ENCODE measurements at regions of chr17 and their contacts with region 1.

Region 1: DNA sequence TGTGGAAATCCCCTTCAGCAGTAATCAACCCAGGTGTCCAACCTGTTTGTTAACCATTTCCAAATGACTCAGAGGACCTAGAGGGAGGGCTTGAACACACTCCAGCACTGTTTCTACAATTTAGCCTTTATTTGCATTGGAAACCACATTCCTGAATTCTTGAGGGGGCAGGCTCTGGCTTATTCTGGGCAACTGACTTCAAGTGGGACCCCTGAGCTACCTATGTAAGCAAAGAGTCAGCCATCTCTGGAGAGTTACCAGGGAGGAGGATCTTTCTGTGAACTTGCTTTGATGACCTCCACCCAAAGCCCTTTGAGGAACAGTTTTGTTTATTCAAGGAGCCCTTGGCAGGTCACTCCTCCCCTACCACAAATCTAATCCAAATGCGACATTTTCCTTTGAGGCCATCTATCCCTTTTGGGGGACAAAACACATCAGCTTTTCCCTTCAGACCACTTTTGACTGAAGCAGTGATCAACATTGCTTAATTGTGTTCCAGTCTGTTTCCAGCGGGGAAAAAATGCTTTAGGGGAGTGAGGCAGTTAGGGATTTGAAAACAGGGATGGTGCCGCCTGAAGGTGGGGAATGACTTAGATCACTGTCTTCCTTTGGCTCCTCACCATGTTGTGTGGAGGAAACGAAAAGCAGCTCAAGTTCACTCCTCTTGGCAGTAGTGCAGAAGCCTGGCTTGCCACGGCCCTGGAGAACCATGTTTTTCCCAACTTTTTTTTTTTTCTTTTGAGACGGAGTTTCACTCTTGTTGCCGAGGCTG is 46.2 kb downstream of the TUBD1 start:
- DNase-seq: peak; percentile 99
- ATAC-seq: peak; percentile 45
- H3K4me3 ChIP-seq: peak overlapping the region; percentile 13 to 54 (median 20)
- H3K27ac ChIP-seq: peak overlapping the region; percentile 98
- H3K4me1 ChIP-seq: peaks cover 94% of the 10 kb centered on the region
- H3K27me3 ChIP-seq: no peaks in the 10 kb centered on the region
- CTCF ChIP-seq: no peak; the same call in 1 of the 2 replicates
- EP300 ChIP-seq: peak; percentile 79 to 92; a peak in 3 of 4 replicates
- POLR2A ChIP-seq: peak in 1 of 2 experiments; percentile 73; a peak in 3 of 4 replicates
- RAD21 ChIP-seq: peak; percentile 28; the same call in 1 of the 2 replicates

Region 2: DNA sequence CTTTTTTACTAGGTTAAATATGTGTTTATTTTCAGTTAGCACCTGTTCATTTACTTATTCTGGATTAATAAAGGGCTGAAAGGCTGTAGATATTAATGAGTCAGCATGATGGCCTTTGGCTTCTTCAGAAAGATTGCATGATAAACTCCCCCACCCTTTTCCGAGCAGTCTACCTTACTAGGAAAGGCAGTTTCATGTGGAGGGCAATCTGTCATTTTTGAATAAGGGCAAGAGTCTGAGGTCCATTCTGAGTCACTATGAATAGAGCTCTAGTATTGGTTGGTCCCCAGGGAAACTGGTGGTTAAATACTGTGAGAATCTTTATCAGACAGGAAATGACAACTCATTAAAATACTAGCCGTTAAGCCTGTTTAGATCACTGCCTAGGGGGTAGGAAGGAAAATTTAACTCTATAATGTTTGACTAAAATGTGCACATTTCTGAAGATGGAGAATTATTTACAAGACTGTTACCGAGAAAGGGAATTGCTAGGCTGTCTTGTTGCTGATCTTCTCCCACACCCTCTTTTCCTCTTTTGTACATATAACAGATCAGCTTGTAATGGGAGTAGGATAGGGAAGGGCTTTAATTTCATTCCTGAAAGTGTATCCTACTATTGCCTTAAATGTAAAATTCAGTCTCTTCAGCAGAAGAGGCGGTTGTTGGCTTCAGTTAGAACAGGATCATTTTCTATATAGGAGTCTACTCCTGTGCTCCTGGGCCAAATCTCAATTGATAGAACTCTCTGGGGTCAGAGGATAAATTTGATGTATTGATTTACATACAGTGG is 17.2 kb before region 1 on chr17:
- CTCF ChIA-PET with region 1: no interaction called
- POLR2A ChIA-PET with region 1: interaction called, 29 read pairs
- in situ Hi-C with region 1: no loop called
- intact Hi-C with region 1: no loop called
- DNase-seq: peak; percentile 97
- ATAC-seq: peak; percentile 94
- H3K4me3 ChIP-seq: peak overlapping the region in 1 of 3 experiments; percentile 26; a peak in 1 of 6 replicates
- H3K27ac ChIP-seq: peak overlapping the region; percentile 90
- H3K4me1 ChIP-seq: peaks cover 84% of the 10 kb centered on the region
- H3K27me3 ChIP-seq: no peaks in the 10 kb centered on the region
- CTCF ChIP-seq: no peak
- EP300 ChIP-seq: peak; percentile 51 to 61; a peak in 2 of 4 replicates
- POLR2A ChIP-seq: 0 out of 4 replicates have a peak, but pooled peaks of 1 of the 2 experiments have one; percentile 20
- RAD21 ChIP-seq: no peak; the same call in 1 of the 2 replicates

Region 3: GRCh38 chr17:59863606-59864005 is 17.0 kb after region 1 on chr17:
- CTCF ChIA-PET with region 1: no interaction called
- POLR2A ChIA-PET with region 1: no interaction called
- in situ Hi-C with region 1: no loop called
- intact Hi-C with region 1: no loop called
- DNase-seq: no peak
- ATAC-seq: no peak
- H3K4me3 ChIP-seq: no peak overlapping the region
- H3K27ac ChIP-seq: no peak overlapping the region
- H3K4me1 ChIP-seq: peaks cover 13% of the 10 kb centered on the region
- H3K27me3 ChIP-seq: no peaks in the 10 kb centered on the region
- CTCF ChIP-seq: no peak
- EP300 ChIP-seq: no peak
- POLR2A ChIP-seq: no peak
- RAD21 ChIP-seq: no peak

Region 4: DNA sequence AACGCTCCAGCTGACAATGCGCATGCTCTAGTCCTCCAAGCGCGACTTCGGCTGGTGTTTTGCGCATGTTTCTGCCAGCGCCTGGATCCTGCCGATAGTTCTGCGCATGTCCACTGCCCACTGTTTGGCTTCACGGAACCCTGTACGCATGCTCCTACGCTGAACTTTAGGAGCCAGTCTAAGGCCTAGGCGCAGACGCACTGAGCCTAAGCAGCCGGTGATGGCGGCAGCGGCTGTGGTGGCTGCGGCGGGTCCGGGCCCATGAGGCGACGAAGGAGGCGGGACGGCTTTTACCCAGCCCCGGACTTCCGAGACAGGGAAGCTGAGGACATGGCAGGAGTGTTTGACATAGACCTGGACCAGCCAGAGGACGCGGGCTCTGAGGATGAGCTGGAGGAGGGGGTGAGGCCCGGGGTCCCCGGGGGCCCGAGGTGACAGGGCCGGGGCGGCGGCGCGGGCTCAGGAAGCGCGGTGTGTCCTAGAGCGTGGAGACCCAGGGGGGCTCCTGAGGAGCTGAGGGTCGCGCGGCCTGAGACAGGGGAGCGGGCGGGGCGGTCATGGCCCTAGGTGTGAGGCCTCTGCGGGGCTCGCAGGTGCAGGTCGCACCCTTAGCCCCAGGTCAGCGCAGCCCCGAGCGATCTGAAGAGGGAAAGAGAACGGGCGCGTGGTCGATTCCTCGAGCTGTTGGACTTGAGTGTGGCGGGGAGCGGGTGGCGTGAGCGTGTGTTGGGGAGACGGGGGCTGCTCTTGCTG is 46.5 kb after region 1 on chr17 and contains the starts of genes RPS6KB1 and TUBD1:
- CTCF ChIA-PET with region 1: no interaction called
- POLR2A ChIA-PET with region 1: interaction called, 6 read pairs
- in situ Hi-C with region 1: no loop called
- intact Hi-C with region 1: loop called (anchors 5 kb)
- DNase-seq: peak; percentile 99
- ATAC-seq: peak; percentile 98
- H3K4me3 ChIP-seq: peak within 1 kb of the TSS; percentile 64 to 98 (median 86)
- H3K27ac ChIP-seq: peak within 1 kb of the TSS; percentile 77
- H3K4me1 ChIP-seq: peaks cover 52% of the 10 kb centered on the region
- H3K27me3 ChIP-seq: no peaks in the 10 kb centered on the region; a peak in 1 of 5 replicates
- CTCF ChIP-seq: no peak; the same call in 1 of the 2 replicates
- EP300 ChIP-seq: no peak
- POLR2A ChIP-seq: peak; percentile 96 to 98
- RAD21 ChIP-seq: peak; percentile 31; the same call in 1 of the 2 replicates
- total RNA-seq, gene RPS6KB1: 42.2 and 44.3 TPM in 2 replicates
- total RNA-seq, gene TUBD1: 25.9 and 38.7 TPM in 2 replicates

Measured in HepG2 (cell line).